AG04449 (cell line): ENCODE measurements at regions of chr3 and their contacts with region 1.

Region 1: DNA sequence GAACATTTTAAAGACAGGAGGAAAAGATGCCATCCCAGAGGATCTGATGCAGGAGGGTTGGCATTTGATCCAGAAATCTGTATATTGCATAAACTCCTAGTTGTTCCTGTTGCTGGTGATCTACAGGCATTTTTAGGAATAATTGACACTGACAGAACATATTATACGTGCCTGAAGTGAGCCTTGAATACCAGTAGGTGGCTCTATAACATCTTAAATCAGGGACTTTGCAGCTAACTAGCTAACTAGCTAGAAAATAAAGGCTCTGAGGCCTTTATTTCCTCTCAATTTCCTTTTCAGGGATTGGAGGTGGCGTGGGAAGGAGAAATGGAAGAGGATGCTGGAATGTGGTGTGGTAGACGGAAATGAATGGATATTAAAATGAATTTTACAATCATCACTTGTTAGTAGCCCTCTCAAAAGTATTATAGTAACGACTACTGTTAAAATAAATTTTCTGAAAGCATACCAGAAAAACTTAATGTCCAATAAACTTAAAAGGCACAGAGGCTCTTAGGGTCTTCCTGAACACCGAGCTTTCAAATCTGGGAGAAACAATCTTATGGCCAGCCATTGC is 73.9 kb upstream of the ZBED2 start:
- DNase-seq: no peak
- H3K4me3 ChIP-seq: no peak overlapping the region
- CTCF ChIP-seq: peak; percentile 58

Region 2: DNA sequence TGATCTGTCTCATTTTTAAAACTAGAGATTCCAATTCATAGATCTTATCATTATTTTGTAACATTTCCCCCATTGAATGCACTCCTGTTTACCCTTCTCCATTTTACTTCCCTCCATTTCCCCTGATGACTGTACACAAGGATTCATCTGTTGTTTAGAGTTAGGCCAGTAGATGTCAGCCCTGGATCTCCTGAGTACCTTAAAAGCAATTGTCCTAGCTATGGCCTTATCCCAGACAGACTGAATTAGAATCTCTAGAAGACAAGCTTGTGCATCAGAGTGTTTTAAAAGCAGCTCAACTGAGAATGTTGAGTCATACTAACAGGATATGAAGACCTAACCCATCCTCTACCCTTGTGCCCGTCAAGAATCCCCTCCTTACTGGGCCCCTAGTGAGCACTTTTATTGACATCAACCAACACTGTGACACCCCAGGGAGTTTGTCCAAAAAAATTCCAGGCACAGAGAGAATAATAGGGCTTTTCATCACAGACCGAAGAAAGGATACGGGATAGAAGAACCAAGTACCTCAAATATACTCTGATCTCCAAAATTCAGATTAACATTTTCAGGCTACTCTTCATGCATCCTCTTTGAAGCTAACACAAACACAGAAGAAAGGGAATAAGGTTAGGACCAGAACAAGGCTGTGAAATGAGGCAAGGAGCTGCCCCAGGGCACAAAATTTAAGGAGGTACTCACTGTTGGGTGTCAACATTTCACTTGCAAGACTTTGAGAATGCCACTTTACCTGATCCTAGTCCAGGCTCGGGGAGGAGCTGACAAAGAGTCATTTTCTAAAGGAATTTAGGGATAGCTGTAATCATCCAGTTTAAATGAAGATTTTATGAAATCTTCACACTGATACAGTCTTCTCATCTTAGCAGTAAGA is 91.0 kb before region 1 on chr3:
- CTCF ChIA-PET with region 1: interaction called, 85 read pairs
- POLR2A ChIA-PET with region 1: interaction called, 3 read pairs
- DNase-seq: peak; percentile 70
- H3K4me3 ChIP-seq: no peak overlapping the region
- CTCF ChIP-seq: peak; percentile 71

Region 3: GRCh38 chr3:111681661-111682426 is 12.8 kb after region 1 on chr3:
- CTCF ChIA-PET with region 1: interaction called, 13 read pairs
- POLR2A ChIA-PET with region 1: no interaction called
- DNase-seq: no peak
- H3K4me3 ChIP-seq: no peak overlapping the region
- CTCF ChIP-seq: no peak

Region 4: DNA sequence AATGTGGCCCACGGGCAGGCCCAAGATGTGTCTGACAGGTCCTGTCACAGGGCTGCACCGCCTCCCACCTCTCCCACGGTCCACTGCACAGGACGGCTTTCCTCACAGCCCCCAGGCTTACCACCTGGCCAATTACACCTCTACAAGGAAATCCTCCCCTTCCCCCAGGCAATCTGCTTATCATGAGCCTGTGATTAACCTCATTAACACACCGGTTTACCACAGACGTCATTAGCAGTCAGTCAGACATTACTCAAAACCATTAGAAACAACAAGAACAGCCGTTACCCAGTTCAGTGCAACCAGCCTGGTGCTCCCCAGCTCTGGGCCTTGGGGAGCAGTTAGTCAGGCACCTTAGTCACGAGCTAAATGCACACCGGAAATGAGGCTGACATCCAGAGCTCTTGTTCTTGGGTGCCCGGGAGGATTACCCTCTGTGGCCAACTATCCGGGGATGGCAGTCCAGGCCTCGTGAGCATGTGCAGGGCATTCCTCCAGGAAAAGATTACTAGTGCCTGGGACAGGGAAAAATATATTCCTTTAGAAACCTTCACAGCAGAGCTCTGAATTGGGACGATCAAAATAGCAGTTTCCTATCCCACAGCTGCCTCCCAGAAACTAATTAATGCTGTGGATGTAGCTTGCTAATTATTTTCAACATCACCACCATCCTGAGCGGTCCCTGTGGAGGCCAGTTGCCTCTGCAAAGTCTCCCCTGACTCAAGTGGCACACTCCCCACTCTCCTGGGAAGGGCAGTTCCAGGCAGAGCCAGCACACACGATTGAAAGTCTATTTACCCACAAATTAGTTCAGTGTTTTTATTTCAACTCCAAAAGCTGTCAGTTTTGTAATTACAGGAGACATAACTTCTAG is 43.5 kb after region 1 on chr3:
- CTCF ChIA-PET with region 1: interaction called, 14 read pairs
- POLR2A ChIA-PET with region 1: interaction called, 3 read pairs
- DNase-seq: no peak
- H3K4me3 ChIP-seq: no peak overlapping the region
- CTCF ChIP-seq: no peak